ENCODE measurements at regions of chr6 and their contacts with region 1.

Region 1: GRCh38 chr6:23016696-23017095 is 447.3 kb downstream of the HDGFL1 start:
- DNase-seq: no peak
- H3K4me3 Mint-ChIP-seq: no peak overlapping the region
- H3K27ac Mint-ChIP-seq: no peak overlapping the region
- H3K4me1 Mint-ChIP-seq: no peaks in the 10 kb centered on the region
- H3K27me3 Mint-ChIP-seq: no peaks in the 10 kb centered on the region

Region 2: DNA sequence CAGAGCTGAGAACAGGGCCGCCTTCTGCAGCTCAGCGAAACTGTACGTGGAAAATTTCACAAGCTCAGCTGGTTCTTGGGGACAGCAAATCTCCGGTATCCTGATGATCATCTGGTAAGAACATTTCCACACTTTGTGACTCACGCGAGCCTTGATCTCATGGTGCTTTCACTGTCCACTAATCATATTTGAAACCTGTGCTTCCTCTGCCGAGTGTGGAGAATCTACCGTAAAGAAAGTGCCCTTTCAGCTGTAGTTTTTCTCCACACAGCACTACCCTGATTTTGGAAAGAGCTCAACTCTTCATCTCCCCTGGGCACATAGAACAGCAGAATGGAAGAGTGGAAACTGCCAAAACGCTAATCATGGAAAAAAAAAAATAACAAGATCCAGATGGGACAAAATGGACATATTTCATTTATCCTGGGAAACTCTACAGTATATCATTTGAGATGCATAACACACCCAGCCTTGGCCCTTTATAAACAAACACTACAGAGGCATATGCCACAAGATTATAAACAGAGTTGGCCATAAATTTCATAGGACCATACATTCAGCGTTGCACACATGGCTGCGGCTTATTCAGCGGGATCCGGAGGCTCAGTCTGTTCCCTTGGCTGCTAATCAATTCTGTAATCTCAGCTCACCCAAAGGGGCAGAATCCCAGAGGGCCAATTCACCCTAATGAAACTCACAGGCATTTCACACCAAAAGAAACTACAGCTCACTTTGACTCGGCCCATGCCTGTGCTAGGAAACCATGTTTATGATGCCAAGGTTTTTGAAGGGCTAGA is 12.8 kb before region 1 on chr6:
- CTCF ChIA-PET with region 1: no interaction called
- intact Hi-C with region 1: no loop called
- DNase-seq: no peak
- H3K4me3 Mint-ChIP-seq: no peak overlapping the region
- H3K27ac Mint-ChIP-seq: no peak overlapping the region
- H3K4me1 Mint-ChIP-seq: no peaks in the 10 kb centered on the region
- H3K27me3 Mint-ChIP-seq: no peaks in the 10 kb centered on the region

Region 3: GRCh38 chr6:23365732-23366131 is 349.0 kb after region 1 on chr6:
- CTCF ChIA-PET with region 1: no interaction called
- intact Hi-C with region 1: no loop called
- DNase-seq: no peak
- H3K4me3 Mint-ChIP-seq: no peak overlapping the region
- H3K27ac Mint-ChIP-seq: no peak overlapping the region
- H3K4me1 Mint-ChIP-seq: no peaks in the 10 kb centered on the region
- H3K27me3 Mint-ChIP-seq: no peaks in the 10 kb centered on the region

Region 4: GRCh38 chr6:23535101-23535500 is 518.4 kb after region 1 on chr6:
- CTCF ChIA-PET with region 1: no interaction called
- intact Hi-C with region 1: no loop called
- DNase-seq: no peak
- H3K4me3 Mint-ChIP-seq: no peak overlapping the region
- H3K27ac Mint-ChIP-seq: no peak overlapping the region
- H3K4me1 Mint-ChIP-seq: no peaks in the 10 kb centered on the region
- H3K27me3 Mint-ChIP-seq: no peaks in the 10 kb centered on the region

Region 5: DNA sequence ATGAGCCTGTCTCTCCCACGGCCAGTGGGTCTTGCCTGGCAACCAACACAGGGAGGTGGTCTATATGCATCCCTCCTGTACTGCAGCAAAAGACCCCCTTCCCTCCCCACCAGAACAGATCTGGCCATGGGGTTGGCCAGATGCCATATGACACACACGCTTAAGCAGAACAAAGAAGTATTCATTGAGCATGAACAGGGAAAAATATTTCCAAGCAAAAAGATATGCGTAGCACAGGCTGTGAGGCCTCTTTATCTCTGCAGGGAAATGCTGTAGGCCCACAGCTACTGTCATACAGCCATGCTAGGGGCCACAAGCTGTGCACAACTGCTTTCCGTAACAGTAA is 1035.9 kb after region 1 on chr6:
- CTCF ChIA-PET with region 1: interaction called, 10 read pairs
- intact Hi-C with region 1: no loop called
- DNase-seq: no peak
- H3K4me3 Mint-ChIP-seq: no peak overlapping the region
- H3K27ac Mint-ChIP-seq: no peak overlapping the region
- H3K4me1 Mint-ChIP-seq: no peaks in the 10 kb centered on the region
- H3K27me3 Mint-ChIP-seq: no peaks in the 10 kb centered on the region